Right ventricle myocardium superior (tissue), 1 donor: ENCODE measurements at regions of chr1 and their contacts with region 1.

Region 1: GRCh38 chr1:64823691-64824476 is 79.0 kb downstream of the RAVER2 start:
- DNase-seq: no peak
- ATAC-seq: peak; percentile 83

Region 2: DNA sequence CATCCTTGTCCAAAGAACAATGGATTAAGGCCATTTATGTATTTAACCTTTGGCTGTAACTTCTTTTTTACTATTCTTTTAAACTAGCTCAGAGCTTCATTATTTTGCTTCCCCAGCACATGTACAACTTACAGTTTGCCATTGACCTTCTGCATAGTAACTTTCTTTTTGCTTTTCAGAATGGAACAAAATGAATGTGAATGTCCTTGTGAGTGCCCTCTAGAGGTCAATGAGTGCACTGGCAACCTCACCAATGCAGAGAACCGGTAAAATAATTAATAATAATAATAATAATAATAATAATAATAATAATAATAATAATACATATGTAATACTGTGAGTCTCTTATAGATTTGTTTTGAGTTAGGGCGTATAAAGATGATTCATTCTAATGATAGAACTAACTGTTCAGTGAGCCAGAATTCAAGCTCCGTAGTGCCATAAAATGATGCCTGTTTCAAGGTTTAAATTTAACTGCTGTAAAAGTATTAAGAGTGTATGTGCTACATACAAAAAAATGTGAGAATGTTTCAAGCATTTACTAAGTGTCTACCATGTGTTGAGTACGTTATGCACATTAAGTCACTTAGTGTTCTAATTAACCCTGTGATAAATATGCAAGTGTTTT is 148.1 kb before region 1 on chr1:
- intact Hi-C with region 1: loop called (anchors 5 kb)
- DNase-seq: no peak
- ATAC-seq: no peak

Region 3: DNA sequence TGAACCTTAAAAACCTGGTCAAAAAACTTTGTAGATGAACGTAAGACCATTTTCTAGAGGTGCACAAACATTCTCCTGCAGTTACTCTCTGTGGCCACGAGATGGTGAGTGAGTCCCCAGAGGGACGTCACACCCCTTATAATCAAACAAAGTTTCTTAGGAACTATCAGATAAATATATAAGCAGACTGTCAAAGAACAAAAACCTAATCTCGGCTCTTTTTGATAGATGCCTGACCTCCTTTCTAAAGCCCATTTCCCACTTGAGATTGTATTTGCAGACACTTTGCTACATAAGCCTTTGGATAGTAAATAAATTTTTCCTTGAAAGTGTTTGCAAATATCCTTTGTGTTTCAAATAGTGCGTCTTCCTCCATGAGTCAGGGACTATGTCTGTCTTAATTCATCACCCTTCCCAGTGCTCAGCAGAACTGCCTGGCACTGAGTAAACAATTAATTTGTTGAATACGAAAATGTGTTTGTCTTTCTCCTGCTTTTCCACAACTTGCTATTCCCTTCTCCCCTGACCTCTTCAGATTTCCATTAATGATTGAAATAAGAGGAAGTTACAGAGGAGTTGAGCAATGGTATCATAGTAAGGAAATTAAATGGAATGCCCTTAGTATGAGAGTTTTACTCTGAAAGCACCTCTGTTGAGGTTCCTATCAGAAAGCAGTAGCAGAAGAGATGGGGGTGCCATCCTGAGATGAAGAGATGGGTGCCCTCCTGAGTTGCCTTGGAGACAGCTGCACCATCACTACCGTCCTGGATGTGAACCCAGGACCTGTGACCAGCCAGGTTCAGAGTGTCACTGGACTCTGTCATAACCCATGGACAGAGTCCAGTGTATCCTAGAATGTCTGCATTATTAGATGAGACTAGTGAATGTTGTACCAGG is 136.8 kb before region 1 on chr1:
- intact Hi-C with region 1: loop called (anchors 5 kb)
- DNase-seq: no peak
- ATAC-seq: peak; percentile 81

Region 4: GRCh38 chr1:64711266-64711665 is 112.6 kb before region 1 on chr1:
- intact Hi-C with region 1: no loop called
- DNase-seq: no peak
- ATAC-seq: no peak

Region 5: DNA sequence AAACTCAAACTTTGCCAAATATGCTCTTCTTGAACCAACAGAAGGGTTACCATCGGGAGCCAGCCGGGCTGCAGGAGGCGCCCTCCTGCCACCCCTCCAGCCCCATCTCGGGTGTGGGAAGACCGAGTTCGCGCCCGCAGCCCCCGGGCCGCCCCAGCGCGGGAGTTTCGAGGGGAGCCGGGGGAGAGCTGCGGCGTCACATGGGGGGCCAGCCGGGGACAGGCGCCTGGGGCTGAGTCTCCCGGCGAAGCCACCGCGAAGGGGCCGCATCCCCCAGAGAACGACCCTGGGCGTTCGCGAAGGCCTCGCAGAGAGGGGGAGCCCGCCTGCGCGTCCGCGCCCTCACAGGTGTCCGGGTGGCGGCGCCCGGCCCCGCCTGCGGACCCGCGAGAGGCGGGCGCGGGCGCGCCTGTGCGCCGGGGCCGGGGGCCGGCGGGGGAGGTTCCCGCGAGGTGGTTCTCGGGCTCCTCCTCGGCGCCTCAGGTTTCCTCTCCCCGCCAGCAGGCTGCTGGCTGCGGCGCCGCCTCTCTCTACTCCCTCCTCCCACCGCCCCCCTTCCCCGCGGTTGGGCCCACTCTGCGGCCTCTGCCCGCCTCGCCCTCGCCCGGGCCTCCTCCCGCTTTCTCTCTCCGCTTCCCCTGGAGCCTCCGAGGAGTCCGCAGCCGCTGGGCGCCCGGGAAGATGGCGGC is 79.2 kb before region 1 on chr1 and contains the start of gene RAVER2:
- intact Hi-C with region 1: loop called (anchors 10 kb)
- DNase-seq: peak; percentile 85
- ATAC-seq: peak; percentile 87
- total RNA-seq, gene RAVER2: 30.1 TPM

Region 6: GRCh38 chr1:64966158-64966971 is 142.5 kb after region 1 on chr1 and contains the start of gene JAK1:
- intact Hi-C with region 1: no loop called
- DNase-seq: peak; percentile 93
- ATAC-seq: peak; percentile 92
- total RNA-seq, gene JAK1: 94.1 TPM